Naive thymus-derived CD4-positive, alpha-beta T cell (primary cell): ENCODE measurements at regions of chr22 and their contacts with region 1.

Region 1: DNA sequence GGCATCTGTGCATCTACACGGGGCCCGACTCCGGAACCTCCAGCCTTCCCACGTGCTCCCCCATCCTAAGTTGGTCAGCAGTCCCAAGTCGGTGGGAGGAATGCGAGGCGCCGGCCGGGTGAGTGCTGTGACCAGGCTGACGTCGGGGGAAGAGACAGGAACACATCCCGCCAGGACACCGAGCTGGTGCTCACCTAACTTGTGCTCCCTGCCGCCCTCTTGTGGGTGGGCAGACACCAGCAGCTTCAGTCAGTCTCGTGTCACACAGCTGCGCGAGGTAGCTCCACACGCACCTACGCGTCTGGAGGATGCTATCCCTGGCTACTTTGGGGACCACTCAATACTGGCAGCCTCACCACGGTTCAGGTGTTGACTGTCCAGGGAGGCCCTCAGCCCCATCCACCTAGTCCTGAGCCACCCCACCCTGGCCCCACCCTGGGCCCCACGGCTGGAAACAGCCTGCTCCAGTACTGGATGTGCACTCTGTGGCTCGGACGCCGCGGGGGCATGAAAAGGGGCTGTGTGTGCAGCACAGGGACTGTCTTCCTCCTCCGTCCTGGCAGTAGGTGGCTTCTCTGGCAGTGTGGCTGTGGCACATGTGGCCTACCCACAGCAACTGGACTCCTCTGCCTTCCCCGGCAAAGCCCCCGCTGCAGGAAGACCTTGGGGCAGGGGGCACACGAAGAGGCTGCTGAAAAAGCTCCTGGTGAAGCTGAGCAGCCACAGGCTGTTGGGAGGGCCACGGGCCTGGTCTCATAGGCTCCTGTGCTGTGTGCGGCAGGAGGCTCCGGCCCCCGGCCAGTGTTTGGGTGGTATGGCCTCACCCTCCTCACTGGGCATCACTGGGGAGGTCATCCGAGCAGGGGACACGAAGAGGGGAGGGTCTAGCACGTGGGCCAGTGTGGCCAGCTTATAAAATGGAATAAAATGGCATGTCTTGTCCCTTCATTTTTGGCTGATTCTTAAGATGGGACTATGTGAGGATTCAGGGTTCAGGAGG is 11.2 kb upstream of the BID start:
- DNase-seq: peak; percentile 54 to 72 (median 65)
- ATAC-seq: peak; percentile 60
- H3K4me3 ChIP-seq: no peak overlapping the region
- H3K4me3 Mint-ChIP-seq: no peak overlapping the region
- H3K27ac ChIP-seq: no peak overlapping the region
- H3K27ac Mint-ChIP-seq: peak overlapping the region in 2 of 9 donors; percentile 28 to 36
- H3K4me1 ChIP-seq: peaks cover 12 to 20% of the 10 kb centered on the region in 2 donors
- H3K4me1 Mint-ChIP-seq: peaks cover 8 to 25% (median 13%) of the 10 kb centered on the region in 7 donors
- H3K27me3 ChIP-seq: no peaks in the 10 kb centered on the region
- H3K27me3 Mint-ChIP-seq: no peaks in the 10 kb centered on the region

Region 2: DNA sequence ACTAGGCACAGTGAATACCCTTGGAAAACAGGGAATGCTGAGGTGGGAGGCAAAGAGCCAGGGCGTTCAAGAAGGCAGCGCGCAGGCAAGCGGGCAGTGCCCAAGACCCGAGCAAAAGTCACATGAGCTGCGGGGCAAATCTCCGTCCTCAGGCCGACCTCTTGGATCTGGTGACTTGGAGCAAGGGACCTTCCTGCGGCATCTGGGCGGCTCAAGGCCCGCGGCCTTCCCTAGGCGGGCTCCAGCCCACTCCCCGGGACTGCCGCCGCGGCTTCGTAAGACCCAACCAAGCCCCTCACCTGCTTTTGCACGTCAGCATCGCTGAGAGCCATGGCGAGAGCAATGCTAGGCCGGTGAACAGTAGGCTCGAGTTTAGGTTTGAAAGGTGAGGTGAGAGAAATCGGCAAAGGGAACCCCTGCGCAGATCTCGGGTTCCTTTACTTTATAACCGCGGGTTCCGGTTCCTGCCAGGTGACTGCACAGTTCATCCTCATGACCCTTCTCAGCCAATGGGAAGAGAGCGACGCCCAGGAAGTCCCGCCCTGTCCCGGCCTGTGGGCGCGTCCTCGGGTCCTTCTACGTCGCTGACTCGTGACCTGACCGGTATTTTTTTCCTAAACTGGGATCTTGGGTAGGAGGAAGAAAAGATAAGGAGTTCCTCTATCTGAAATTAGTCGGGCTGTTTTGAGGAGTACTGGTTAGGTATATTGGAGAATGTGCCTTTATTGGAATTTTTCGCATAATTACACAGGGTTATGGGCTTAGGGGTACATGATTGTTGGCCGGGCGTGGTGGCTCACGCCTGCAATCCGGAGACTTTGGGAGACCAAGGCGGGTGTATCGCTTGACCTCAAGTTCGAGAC is 156.9 kb before region 1 on chr22 and contains the start of gene ATP6V1E1:
- CTCF ChIA-PET with region 1: no interaction called
- POLR2A ChIA-PET with region 1: no interaction called
- intact Hi-C with region 1: no loop called
- DNase-seq: peak; percentile 82 to 96 (median 94)
- ATAC-seq: peak; percentile 100
- H3K4me3 ChIP-seq: peak within 1 kb of the TSS; percentile 100
- H3K4me3 Mint-ChIP-seq: peak within 1 kb of the TSS; percentile 89 to 99 (median 96)
- H3K27ac ChIP-seq: peak within 1 kb of the TSS; percentile 97
- H3K27ac Mint-ChIP-seq: peak within 1 kb of the TSS; percentile 90 to 99 (median 97)
- H3K4me1 ChIP-seq: peaks cover 13 to 14% of the 10 kb centered on the region in 2 donors
- H3K4me1 Mint-ChIP-seq: peaks cover 7 to 40% (median 31%) of the 10 kb centered on the region in 7 donors
- H3K27me3 ChIP-seq: no peaks in the 10 kb centered on the region
- H3K27me3 Mint-ChIP-seq: no peaks in the 10 kb centered on the region
- total RNA-seq, gene ATP6V1E1: 51.0 to 101 (median 80.4) TPM

Region 3: DNA sequence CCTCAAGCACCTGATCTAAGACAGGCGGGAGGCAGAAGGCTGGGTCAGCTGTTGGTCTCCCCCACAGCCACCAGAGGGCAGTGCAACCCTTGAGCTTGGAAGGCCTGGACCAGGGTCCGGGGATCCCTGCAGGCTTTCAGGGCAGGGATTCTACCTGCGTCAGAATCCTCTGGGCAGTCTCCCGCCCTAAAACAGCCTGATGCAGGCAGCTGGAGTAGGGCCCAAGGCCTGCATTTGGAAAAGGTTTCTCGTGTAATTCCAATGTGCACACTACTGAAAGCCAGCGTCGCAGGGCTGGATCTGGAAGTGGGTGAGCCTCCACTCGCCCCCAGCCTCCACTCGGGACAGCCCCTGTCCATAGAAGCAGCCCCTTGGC is 43.0 kb before region 1 on chr22:
- CTCF ChIA-PET with region 1: interaction called, 82 read pairs
- POLR2A ChIA-PET with region 1: interaction called, 3 read pairs
- intact Hi-C with region 1: loop called (anchors 1 kb)
- DNase-seq: peak; percentile 32 to 72 (median 53)
- ATAC-seq: peak; percentile 86
- H3K4me3 ChIP-seq: no peak overlapping the region
- H3K4me3 Mint-ChIP-seq: no peak overlapping the region
- H3K27ac ChIP-seq: no peak overlapping the region
- H3K27ac Mint-ChIP-seq: peak overlapping the region in 3 of 9 donors; percentile 8 to 67 (median 9)
- H3K4me1 ChIP-seq: no peaks in the 10 kb centered on the region
- H3K4me1 Mint-ChIP-seq: peaks cover 3 to 11% (median 7%) of the 10 kb centered on the region in 7 donors
- H3K27me3 ChIP-seq: no peaks in the 10 kb centered on the region
- H3K27me3 Mint-ChIP-seq: no peaks in the 10 kb centered on the region

Region 4: DNA sequence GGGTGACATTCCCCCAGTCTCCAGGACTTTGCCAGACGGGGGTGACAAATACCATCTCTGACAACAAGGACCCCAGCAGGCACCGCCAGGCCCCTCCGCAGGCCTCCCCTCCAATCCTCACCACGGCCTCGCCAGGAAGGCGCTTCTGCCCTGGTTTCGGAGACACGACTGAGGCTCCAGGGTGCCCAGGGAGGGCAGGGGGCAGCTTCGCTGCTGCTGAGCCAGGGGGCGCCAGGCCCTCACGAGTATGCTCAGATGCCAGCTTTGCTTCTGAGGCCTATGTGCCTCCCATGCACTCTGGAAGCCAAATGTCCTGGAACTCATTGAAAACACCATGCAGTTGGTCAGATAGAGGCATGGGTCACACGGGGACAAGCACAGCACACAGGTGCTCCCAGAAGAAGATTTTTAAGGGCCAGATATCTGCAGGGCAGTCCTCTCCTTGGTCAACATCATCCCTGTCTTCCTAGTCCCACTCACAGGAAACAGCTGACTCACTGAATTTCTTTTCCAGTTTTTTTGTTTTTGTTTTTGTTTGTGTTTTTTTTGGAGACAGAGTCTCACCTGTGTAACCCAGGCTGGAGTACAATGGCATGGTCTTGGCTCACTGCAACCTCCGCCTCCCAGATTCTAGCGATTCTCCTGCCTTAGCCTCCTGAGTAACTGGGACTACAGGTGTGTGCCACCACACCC is 31.1 kb before region 1 on chr22:
- CTCF ChIA-PET with region 1: interaction called, 41 read pairs
- POLR2A ChIA-PET with region 1: no interaction called
- intact Hi-C with region 1: loop called (anchors 1 kb)
- DNase-seq: peak in 4 of 9 donors; percentile 24 to 45 (median 30)
- ATAC-seq: peak; percentile 54
- H3K4me3 ChIP-seq: no peak overlapping the region
- H3K4me3 Mint-ChIP-seq: no peak overlapping the region
- H3K27ac ChIP-seq: no peak overlapping the region
- H3K27ac Mint-ChIP-seq: peak overlapping the region in 3 of 9 donors; percentile 38 to 43 (median 40)
- H3K4me1 ChIP-seq: no peaks in the 10 kb centered on the region
- H3K4me1 Mint-ChIP-seq: peaks cover 0 to 23% (median 7%) of the 10 kb centered on the region in 7 donors
- H3K27me3 ChIP-seq: no peaks in the 10 kb centered on the region
- H3K27me3 Mint-ChIP-seq: no peaks in the 10 kb centered on the region

Region 5: GRCh38 chr22:17767233-17768065 is 18.0 kb before region 1 on chr22:
- CTCF ChIA-PET with region 1: interaction called, 12 read pairs
- POLR2A ChIA-PET with region 1: interaction called, 9 read pairs
- intact Hi-C with region 1: loop called in 1 of 2 experiments (anchors 1 kb)
- DNase-seq: peak in 5 of 9 donors; percentile 32 to 58 (median 45)
- ATAC-seq: peak; percentile 64
- H3K4me3 ChIP-seq: peak overlapping the region; percentile 14
- H3K4me3 Mint-ChIP-seq: peak overlapping the region; percentile 55 to 78 (median 70)
- H3K27ac ChIP-seq: peak overlapping the region; percentile 6
- H3K27ac Mint-ChIP-seq: peak overlapping the region; percentile 13 to 94 (median 83)
- H3K4me1 ChIP-seq: peaks cover 11 to 26% of the 10 kb centered on the region in 2 donors
- H3K4me1 Mint-ChIP-seq: peaks cover 34 to 66% (median 51%) of the 10 kb centered on the region in 7 donors
- H3K27me3 ChIP-seq: no peaks in the 10 kb centered on the region
- H3K27me3 Mint-ChIP-seq: peaks cover 0 to 27% (median 0%) of the 10 kb centered on the region in 5 donors

Region 6: DNA sequence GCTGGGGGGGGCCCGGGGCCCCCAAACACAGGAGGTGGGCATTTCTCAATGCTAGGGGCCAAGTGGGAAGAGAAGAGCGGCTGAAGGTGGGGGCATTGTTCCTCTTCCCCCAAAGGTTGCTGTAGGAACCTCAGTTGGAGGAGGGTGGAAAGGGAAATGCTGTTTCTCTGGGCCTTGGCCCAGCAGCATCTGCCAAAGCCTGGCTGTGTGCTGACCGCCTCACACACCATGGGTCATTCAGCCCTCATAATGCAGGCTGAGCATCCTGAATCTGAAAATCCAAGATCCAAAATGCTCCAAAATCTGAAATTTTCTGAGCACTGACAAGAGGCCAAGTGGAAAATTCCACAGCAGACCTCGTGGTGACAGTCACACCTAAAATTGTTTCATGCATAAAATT is 37.7 kb after region 1 on chr22:
- CTCF ChIA-PET with region 1: no interaction called
- POLR2A ChIA-PET with region 1: no interaction called
- intact Hi-C with region 1: no loop called
- DNase-seq: no peak
- ATAC-seq: no peak
- H3K4me3 ChIP-seq: no peak overlapping the region
- H3K4me3 Mint-ChIP-seq: no peak overlapping the region
- H3K27ac ChIP-seq: no peak overlapping the region
- H3K27ac Mint-ChIP-seq: no peak overlapping the region
- H3K4me1 ChIP-seq: no peaks in the 10 kb centered on the region
- H3K4me1 Mint-ChIP-seq: no peaks in the 10 kb centered on the region
- H3K27me3 ChIP-seq: no peaks in the 10 kb centered on the region
- H3K27me3 Mint-ChIP-seq: no peaks in the 10 kb centered on the region

Region 7: DNA sequence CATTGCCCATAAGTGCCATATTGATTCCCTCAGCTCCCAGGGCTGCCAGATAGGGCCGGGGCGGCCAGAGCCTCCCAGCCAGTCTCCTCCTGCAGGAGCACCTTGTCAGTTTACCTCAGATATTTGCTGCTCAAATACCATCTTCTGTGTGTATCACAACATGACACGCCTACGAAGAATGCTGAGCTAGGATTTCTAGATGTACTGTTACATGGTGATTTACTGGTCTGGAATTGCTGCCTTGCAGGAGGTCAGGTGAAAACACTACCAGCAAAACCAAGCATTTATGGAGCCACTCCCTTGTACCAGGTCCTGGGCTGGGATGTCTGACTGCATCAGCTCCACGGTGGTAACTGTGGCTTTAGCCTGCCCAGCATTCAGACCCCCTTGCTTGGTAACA is 227.0 kb after region 1 on chr22:
- CTCF ChIA-PET with region 1: no interaction called
- POLR2A ChIA-PET with region 1: no interaction called
- intact Hi-C with region 1: no loop called
- DNase-seq: no peak
- ATAC-seq: no peak
- H3K4me3 ChIP-seq: no peak overlapping the region
- H3K4me3 Mint-ChIP-seq: no peak overlapping the region
- H3K27ac ChIP-seq: no peak overlapping the region
- H3K27ac Mint-ChIP-seq: no peak overlapping the region
- H3K4me1 ChIP-seq: no peaks in the 10 kb centered on the region
- H3K4me1 Mint-ChIP-seq: no peaks in the 10 kb centered on the region
- H3K27me3 ChIP-seq: no peaks in the 10 kb centered on the region
- H3K27me3 Mint-ChIP-seq: peaks cover 0 to 14% (median 0%) of the 10 kb centered on the region in 5 donors